ENCODE measurements at regions of chr13 and their contacts with region 1.

Region 1: DNA sequence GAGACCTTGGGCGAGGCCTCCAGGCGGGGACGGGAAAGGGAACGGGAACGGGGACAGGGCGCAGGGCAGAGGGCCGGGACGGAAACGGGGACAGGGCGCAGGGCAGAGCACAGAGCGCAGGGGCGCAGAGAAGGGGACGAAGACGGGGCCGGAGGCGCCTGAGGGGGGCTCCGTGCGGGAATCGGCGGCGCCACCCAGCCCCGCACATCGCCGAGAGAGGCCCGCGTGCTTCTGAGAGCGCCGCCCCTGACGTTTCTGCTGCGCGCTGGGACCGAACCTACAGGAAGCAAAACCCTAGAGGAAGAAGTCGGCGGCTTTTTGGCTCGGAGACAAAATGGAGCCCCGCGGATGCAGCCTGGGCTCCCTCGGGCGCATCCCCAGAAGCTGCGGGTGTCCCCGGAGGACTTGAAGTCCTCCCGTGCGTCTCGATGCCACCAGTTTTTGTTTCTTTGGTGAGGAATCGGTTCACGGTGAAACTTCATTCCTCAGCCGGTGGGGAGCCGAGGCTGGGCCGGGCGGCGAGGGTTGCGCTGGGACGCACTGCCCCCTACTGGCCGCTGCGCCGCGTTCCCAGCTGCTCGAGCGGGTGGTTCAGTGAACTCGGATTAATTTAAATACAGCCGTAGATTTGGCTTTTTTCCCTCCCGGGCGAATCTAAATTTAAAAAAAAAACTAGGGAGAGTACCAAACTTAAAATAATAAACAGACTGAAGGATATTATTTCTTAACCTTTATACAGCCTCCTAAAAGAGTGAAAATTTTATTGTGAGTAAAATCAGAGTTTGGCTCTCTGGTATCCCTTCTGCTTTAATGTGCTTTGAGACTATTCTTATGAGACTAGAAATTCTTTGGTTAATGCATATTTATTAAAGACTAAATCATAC is 350.0 kb upstream of the ARGLU1 start:
- DNase-seq: peak; percentile 15 to 27
- ATAC-seq: peak; percentile 60 to 73
- H3K4me3 ChIP-seq: peak overlapping the region; percentile 51 to 67 (median 58)
- H3K27ac ChIP-seq: peak overlapping the region; percentile 72 to 81 (median 78)
- H3K4me1 ChIP-seq: no peaks in the 10 kb centered on the region
- H3K27me3 ChIP-seq: no peaks in the 10 kb centered on the region
- CTCF ChIP-seq: peak; percentile 62 to 80 (median 71)
- POLR2A ChIP-seq: peak in 1 of 2 donors; percentile 27

Region 2: DNA sequence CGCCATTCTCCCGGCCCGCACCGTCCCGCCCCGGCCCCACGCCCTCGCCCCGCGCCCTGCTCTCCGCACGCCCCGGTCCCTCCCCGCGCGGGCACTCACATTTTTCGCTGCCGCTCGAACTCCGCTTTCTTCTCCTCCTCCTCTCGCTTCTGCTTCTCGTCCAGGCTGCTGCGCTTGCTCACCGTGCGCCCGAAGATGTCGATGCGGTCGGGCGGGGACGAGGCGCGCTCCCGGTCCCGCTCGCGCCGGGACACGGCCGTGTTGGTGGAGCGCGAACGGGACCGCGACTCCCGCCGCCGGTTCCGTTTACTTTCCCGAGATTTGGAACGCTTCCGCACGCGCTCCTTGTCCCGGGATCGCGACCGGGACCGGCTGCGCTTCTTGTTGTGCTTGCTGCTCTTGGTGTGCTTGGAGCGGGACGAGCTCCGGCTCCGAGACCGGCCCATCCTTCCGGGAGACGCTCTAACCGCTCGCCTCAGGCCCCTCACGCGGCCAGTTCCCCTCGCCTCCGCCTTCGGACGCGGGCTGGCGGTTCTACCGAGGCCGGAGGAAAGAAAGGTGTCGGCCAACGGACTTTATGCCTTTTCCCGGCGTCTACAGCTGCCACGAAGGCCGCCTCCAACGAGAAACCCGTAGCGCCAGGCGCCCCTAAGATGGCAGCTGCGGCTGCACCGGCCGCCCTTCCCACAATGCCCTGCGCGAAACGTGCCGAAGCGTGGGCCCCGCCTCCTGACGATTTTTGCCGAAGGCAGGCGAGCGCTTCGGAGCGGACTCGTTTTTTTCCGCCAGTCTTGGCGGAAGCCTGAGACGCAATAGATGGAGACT is 350.2 kb before region 1 on chr13 and contains the start of gene ARGLU1:
- in situ Hi-C with region 1: no loop called
- intact Hi-C with region 1: loop called (anchors 10 kb)
- DNase-seq: peak; percentile 84 to 86
- ATAC-seq: peak; percentile 88
- H3K4me3 ChIP-seq: peak within 1 kb of the TSS; percentile 92 to 98 (median 97)
- H3K27ac ChIP-seq: peak within 1 kb of the TSS; percentile 92 to 98 (median 94)
- H3K4me1 ChIP-seq: peaks cover 39 to 46% of the 10 kb centered on the region in 2 donors
- H3K27me3 ChIP-seq: no peaks in the 10 kb centered on the region
- CTCF ChIP-seq: no peak
- POLR2A ChIP-seq: peak; percentile 94 to 95
- total RNA-seq, gene ARGLU1: 10.0 to 41.1 (median 12.9) TPM

Region 3: DNA sequence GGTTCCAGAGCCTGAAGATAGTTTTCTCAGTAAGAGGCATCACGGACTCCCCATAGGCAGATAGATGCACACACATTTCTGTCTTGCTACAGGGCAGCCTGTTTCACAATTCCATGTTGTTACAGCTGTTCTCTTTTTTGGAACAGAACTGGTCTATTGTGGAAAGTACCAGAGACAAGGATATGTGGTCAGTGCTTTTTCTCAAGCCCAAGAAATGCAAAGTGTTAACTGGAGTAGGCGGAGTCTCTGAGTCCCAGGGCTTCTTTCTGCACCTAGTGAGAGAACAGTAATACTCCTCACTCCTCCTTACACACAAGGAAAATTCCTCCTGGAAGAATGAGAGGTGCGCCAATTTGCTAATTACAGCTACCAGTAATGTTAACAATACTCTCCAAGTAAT is 208.4 kb before region 1 on chr13:
- in situ Hi-C with region 1: no loop called
- intact Hi-C with region 1: loop called (anchors 5 kb)
- DNase-seq: no peak
- ATAC-seq: peak; percentile 73 to 74
- H3K4me3 ChIP-seq: peak overlapping the region in 3 of 4 donors; percentile 4 to 29 (median 5)
- H3K27ac ChIP-seq: peak overlapping the region; percentile 33 to 76 (median 70)
- H3K4me1 ChIP-seq: no peaks in the 10 kb centered on the region
- H3K27me3 ChIP-seq: no peaks in the 10 kb centered on the region
- CTCF ChIP-seq: no peak
- POLR2A ChIP-seq: peak in 1 of 2 donors; percentile 48

Region 4: DNA sequence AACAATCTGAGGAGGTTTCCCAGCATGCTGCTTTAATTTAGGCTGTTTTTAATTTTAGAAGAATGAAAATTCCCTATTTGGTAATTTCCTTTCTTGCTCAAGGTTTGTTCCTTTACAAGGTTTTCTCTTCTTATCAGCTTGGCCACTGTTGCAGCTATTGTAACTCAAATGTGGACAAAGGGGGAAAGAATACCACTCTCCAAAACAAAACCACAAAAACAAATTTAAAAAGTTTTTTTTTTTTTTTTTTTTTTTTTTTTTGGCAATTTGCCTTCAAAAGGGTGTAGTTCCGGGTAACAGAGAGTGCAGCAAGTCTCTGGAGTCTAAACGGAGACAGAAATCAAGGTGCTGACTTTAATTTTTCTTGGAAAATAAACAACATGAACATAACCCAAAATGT is 43.6 kb before region 1 on chr13:
- in situ Hi-C with region 1: no loop called
- intact Hi-C with region 1: loop called (anchors 5 kb)
- DNase-seq: no peak
- ATAC-seq: peak in 1 of 2 donors; percentile 63
- H3K4me3 ChIP-seq: no peak overlapping the region
- H3K27ac ChIP-seq: peak overlapping the region in 3 of 4 donors; percentile 51 to 62 (median 59)
- H3K4me1 ChIP-seq: peaks cover 0 to 3% of the 10 kb centered on the region in 2 donors
- H3K27me3 ChIP-seq: no peaks in the 10 kb centered on the region
- CTCF ChIP-seq: no peak
- POLR2A ChIP-seq: no peak

Region 5: DNA sequence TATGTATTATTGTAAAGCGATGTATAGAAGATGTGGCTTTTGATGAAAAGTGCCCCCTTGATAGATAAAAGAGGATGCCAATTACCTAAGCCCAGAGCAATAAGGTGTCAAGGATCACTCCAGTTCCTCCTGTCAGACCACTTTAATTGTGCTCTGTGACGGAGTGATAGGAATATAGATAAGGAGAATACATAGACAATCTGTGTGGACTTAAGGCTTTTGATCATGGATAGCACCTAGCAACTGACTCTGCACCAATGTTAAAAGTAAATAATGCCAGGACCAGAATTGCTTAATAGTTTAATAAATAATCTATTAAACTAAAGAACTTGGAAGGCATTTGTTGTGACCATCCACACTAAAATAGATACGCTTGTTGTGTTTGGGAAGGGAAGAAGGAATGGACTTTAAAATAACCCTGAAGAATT is 40.7 kb after region 1 on chr13:
- in situ Hi-C with region 1: no loop called
- intact Hi-C with region 1: no loop called
- DNase-seq: no peak
- ATAC-seq: no peak
- H3K4me3 ChIP-seq: no peak overlapping the region
- H3K27ac ChIP-seq: no peak overlapping the region
- H3K4me1 ChIP-seq: no peaks in the 10 kb centered on the region
- H3K27me3 ChIP-seq: no peaks in the 10 kb centered on the region
- CTCF ChIP-seq: no peak
- POLR2A ChIP-seq: no peak

Region 6: GRCh38 chr13:107266657-107267056 is 348.7 kb after region 1 on chr13:
- in situ Hi-C with region 1: no loop called
- intact Hi-C with region 1: no loop called
- DNase-seq: no peak
- ATAC-seq: no peak
- H3K4me3 ChIP-seq: no peak overlapping the region
- H3K27ac ChIP-seq: no peak overlapping the region
- H3K4me1 ChIP-seq: no peaks in the 10 kb centered on the region
- H3K27me3 ChIP-seq: no peaks in the 10 kb centered on the region
- CTCF ChIP-seq: no peak
- POLR2A ChIP-seq: no peak

Region 7: GRCh38 chr13:107493266-107493665 is 575.4 kb after region 1 on chr13:
- in situ Hi-C with region 1: no loop called
- intact Hi-C with region 1: no loop called
- DNase-seq: no peak
- ATAC-seq: no peak
- H3K4me3 ChIP-seq: no peak overlapping the region
- H3K27ac ChIP-seq: no peak overlapping the region
- H3K4me1 ChIP-seq: no peaks in the 10 kb centered on the region
- H3K27me3 ChIP-seq: no peaks in the 10 kb centered on the region
- CTCF ChIP-seq: no peak
- POLR2A ChIP-seq: no peak

Measured in gastrocnemius medialis (tissue), 4 donors.